Activated CD8-positive, alpha-beta T cell treated with anti-CD3 and anti-CD28 coated beads for 36 hours (primary cell): ENCODE measurements at regions of chr11 and their contacts with region 1.

Region 1: DNA sequence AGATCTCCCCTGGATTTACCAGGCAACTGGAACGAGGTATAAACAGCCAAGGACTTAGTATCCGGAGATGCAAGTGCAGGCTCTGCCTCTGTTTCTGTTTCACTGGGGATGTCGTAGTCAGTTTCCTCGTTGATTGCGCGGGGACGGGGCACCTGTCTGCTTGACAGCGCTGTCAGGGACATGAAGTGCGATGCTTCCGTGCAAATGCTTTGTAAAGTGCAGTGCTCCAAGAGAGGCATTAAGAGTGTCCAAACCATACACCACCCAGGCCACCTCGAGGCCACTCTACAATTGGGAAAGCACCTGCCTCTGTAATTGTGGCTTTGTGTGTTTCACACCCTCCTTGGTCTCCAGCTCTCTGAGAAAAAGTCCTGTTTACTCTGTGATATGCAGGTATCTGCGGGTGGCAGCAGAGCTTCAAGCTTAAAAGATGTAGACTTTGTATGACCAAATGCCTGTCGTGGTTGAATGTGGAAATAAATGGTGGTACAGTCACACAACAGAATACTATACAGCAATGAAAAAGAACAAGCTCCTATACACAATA is 18.6 kb upstream of the CD5 start:
- DNase-seq: peak; percentile 83
- ATAC-seq: peak; percentile 70
- H3K4me3 Mint-ChIP-seq: peak overlapping the region; percentile 78
- H3K27ac Mint-ChIP-seq: peak overlapping the region; percentile 88
- H3K4me1 Mint-ChIP-seq: peaks cover 65% of the 10 kb centered on the region
- H3K27me3 Mint-ChIP-seq: no peaks in the 10 kb centered on the region
- CTCF ChIP-seq: no peak

Region 2: DNA sequence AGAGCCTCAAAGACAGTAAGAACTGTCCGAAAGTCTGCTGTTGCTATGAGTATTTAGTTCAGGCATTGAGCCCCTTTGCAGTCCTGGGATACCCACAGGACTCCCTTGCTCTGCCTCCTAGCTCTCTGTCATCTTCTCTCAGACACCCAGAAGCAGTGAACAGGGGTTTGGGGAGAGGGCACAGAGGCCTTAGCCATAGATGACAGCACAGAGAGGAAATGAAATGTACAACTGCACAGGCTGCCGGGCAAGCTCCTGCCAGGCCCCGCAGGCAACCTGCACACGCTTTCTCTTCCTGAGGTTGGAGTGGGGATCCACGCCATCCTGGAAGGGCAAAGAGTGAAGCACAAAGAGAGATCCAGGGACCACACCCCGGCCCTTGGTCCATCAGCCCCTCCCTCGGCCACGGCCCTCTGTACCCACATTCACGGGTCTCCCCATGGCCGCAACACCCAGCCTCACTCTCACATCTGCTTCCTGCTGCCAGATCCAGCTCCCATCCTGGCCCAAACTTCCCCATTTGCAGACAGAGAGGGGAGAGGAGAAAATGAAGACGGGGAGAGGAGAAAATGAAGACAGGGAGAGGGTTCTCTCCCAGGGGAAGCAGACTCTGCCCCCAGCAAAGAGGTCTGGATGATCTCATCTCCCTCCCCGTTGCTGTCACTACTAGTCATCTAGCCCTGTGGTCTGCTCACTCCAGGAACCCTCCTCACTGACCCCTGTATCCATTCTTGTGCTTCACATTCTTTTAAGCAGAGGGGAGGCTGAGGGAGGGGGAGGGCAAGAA is 71.5 kb before region 1 on chr11:
- CTCF ChIA-PET with region 1: no interaction called
- POLR2A ChIA-PET with region 1: no interaction called
- intact Hi-C with region 1: no loop called
- DNase-seq: no peak
- ATAC-seq: no peak
- H3K4me3 Mint-ChIP-seq: no peak overlapping the region
- H3K27ac Mint-ChIP-seq: peak overlapping the region; percentile 66
- H3K4me1 Mint-ChIP-seq: peaks cover 45% of the 10 kb centered on the region
- H3K27me3 Mint-ChIP-seq: no peaks in the 10 kb centered on the region
- CTCF ChIP-seq: no peak

Region 3: DNA sequence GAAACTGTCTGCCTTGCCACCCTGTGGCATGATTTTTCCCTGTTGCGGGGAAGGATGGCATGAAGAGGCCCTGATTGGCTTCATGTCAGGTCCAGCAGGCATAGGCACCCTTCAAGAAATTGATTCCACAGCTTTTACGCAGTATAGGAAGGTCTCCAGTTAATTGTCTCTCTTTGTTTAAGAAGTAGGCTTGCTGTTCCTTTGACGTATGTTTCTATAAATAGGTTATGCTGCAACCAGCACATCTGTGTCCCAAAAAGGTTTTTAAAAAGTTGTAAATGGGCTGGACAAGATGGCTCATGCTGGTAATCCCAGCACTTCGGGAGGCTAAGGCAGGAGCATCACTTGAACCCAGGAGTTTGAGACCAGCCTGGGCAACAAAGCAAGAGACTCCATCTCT is 49.6 kb before region 1 on chr11:
- CTCF ChIA-PET with region 1: no interaction called
- POLR2A ChIA-PET with region 1: no interaction called
- intact Hi-C with region 1: no loop called
- DNase-seq: no peak
- ATAC-seq: no peak
- H3K4me3 Mint-ChIP-seq: no peak overlapping the region
- H3K27ac Mint-ChIP-seq: no peak overlapping the region
- H3K4me1 Mint-ChIP-seq: peaks cover 62% of the 10 kb centered on the region
- H3K27me3 Mint-ChIP-seq: no peaks in the 10 kb centered on the region
- CTCF ChIP-seq: no peak

Region 4: DNA sequence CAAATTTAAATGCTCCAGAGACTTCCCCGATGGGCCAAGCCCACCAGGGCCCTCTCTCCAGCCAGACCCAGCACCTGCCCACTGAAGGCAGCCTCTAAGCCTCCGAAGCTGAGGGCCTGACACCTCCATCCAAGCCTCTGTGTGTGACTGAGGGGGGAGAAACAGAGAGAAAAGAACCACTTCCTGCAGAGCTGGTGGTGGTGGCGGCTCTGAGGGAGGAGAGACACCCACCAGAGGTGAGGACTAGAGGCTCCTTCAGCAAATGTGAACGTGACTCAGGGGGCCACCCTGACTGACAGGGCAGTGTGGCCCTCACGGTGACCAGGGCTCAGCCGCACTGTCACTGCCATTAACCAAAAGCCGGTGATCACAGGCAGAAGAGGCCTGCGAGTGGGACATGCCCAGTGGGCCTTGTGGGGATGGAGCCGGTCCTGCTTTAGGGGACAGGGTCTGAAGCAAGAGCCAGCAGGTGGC is 12.4 kb before region 1 on chr11:
- CTCF ChIA-PET with region 1: interaction called, 26 read pairs
- POLR2A ChIA-PET with region 1: interaction called, 42 read pairs
- intact Hi-C with region 1: no loop called
- DNase-seq: peak; percentile 87
- ATAC-seq: peak; percentile 95
- H3K4me3 Mint-ChIP-seq: peak overlapping the region; percentile 47
- H3K27ac Mint-ChIP-seq: peak overlapping the region; percentile 93
- H3K4me1 Mint-ChIP-seq: peaks cover 87% of the 10 kb centered on the region
- H3K27me3 Mint-ChIP-seq: no peaks in the 10 kb centered on the region
- CTCF ChIP-seq: no peak

Region 5: DNA sequence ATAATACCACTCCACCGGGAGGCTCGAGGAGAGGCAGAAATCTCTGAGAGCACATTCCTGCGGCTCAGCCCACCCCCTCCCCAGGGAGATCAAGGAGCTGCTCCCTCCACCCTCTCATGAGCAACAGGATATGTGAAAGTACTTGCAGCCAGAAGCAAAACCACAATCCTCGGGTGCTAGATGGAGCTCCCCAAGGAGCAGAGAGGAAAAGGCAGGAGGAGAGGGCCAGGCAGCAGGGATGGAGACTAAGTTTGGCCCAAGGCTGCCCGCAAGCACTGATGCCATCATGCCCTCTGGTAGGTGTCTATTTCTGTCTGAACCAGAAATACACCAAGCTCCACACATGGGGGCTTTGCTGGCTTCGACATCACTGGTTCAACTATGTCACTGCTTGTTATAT is 55.3 kb after region 1 on chr11:
- CTCF ChIA-PET with region 1: no interaction called
- POLR2A ChIA-PET with region 1: no interaction called
- intact Hi-C with region 1: no loop called
- DNase-seq: no peak
- ATAC-seq: no peak
- H3K4me3 Mint-ChIP-seq: no peak overlapping the region
- H3K27ac Mint-ChIP-seq: no peak overlapping the region
- H3K4me1 Mint-ChIP-seq: no peaks in the 10 kb centered on the region
- H3K27me3 Mint-ChIP-seq: no peaks in the 10 kb centered on the region
- CTCF ChIP-seq: no peak